ENCODE measurements at regions of chr11 and their contacts with region 1.

Region 1: DNA sequence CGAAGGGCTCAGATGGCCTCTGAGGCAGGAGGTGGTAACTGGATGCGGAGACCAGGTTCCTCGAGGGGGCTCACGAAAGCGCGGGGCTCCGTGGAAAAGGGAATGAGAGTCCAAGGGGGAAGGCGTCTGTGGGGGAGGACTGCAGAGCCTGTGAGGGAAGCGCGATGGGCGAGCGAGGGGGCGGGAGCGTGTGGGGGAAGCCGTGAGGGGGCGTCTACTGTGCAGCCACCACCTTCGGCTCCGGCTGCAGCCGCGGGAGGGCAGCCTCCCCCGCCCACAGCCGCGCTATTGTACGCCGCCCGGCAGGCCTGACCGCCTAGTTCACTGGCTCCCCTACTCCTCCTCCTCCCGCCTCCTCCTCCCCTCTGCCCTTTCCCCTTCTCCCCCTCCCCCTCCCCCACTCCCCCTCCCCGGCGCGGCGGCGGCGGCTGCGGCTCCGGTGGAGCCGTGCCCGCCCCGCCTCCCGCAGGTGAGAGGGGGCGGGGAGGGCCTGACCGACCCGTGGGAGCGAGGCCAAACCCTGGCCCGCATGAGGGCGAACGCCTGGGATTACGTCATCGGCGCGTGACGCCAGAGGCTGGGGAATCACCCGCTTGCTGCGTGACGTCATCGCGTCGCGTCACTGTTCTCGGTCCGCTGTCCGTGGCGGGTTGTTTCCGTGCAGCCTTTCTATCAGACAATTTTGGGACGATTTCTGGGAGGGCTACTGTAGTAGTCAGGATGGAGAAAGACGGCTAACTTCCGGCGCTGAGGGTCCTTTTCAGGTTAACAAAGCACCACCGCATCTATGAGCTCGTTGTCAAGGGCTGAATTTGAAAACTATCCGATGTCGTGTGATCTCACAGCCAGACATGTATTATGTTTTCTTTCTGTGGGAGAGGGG is at the start of gene PAK1:
- DNase-seq: peak; percentile 91
- H3K4me3 Mint-ChIP-seq: peak within 1 kb of the TSS; percentile 71
- H3K27ac Mint-ChIP-seq: peak within 1 kb of the TSS; percentile 38
- H3K4me1 Mint-ChIP-seq: peaks cover 5% of the 10 kb centered on the region
- H3K27me3 Mint-ChIP-seq: peaks cover 13% of the 10 kb centered on the region
- total RNA-seq, gene PAK1: 30.4 to 33.1 TPM

Region 2: DNA sequence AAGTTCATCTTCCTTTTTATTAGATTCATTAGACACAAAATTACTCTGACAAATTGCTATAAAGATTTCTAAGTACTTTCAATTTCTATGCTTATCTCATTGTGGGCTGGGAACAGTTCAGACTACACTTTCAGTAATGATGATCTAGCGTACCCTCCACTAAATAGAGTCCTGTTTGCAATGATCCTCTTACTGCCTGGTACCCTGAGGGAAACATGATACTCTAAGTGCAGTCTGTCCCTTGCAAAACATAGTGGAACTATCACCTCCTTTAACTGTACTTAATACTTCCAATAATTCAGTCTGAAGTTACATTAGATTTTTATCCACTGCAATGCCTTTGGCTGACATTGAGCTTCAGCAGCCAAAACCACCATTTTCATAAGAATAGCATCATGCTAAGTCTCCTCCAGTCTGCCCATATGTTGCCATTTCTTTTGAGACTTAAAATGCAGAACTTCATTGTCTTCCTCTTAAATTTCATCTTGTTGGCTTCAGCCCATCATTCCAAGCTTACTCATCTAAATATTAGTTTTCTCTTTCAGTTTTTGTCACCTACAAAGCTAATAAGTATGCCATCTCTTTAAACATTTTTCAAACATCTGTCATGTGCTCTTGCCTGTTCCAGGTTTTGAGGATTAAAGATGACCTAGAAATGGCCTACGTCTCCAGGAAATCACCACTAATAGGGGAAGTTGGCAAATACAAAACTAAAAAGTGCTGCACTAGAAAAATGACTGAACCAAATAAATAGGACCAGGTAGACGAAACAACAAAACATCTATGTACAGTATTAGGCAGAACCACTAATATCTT is 55.7 kb before region 1 on chr11:
- CTCF ChIA-PET with region 1: no interaction called
- POLR2A ChIA-PET with region 1: no interaction called
- intact Hi-C with region 1: no loop called
- DNase-seq: no peak
- H3K4me3 Mint-ChIP-seq: no peak overlapping the region
- H3K27ac Mint-ChIP-seq: no peak overlapping the region
- H3K4me1 Mint-ChIP-seq: peaks cover 3% of the 10 kb centered on the region
- H3K27me3 Mint-ChIP-seq: no peaks in the 10 kb centered on the region

Region 3: DNA sequence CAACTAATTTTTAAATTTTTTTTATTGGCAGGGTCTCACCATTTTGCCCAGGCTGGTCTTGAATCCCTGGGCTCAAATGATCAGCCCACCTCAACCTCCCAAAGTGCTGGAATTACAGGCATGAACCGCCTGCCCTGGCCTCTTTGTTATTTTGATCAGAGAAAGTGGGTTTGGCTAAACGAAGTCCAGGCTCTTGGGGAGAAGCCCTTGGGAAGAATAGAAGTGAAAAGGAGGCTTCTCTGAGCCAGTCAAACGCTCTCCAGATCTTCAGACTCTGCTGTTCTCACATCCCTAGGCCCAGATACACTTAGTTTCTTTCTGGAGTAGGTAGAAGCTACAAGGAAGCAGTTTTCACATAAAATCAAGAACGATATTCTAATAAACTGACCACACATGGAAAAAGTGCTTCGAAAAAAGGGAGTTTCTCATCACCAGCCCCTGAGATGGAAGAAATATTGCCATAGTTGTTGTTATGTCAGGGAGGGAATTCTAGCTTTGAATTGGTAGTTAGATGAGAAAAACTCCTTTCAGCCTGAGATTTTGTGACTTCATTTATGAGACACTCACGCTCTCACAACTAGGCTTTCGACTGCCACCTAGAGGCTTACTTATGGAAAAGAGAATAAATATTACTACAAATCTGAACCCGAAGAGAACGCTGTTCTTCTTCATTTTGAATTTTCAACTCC is 74.0 kb after region 1 on chr11:
- CTCF ChIA-PET with region 1: interaction called, 8 read pairs
- POLR2A ChIA-PET with region 1: interaction called, 3 read pairs
- intact Hi-C with region 1: loop called (anchors 2 kb)
- DNase-seq: peak; percentile 21
- H3K4me3 Mint-ChIP-seq: no peak overlapping the region
- H3K27ac Mint-ChIP-seq: no peak overlapping the region
- H3K4me1 Mint-ChIP-seq: peaks cover 2% of the 10 kb centered on the region
- H3K27me3 Mint-ChIP-seq: no peaks in the 10 kb centered on the region

Region 4: GRCh38 chr11:77637345-77638165 is 163.5 kb after region 1 on chr11 and contains the start of gene CLNS1A:
- CTCF ChIA-PET with region 1: interaction called, 3 read pairs
- POLR2A ChIA-PET with region 1: no interaction called
- intact Hi-C with region 1: loop called (anchors 5 kb)
- DNase-seq: peak; percentile 90
- H3K4me3 Mint-ChIP-seq: peak within 1 kb of the TSS; percentile 95
- H3K27ac Mint-ChIP-seq: peak within 1 kb of the TSS; percentile 95
- H3K4me1 Mint-ChIP-seq: peaks cover 35% of the 10 kb centered on the region
- H3K27me3 Mint-ChIP-seq: no peaks in the 10 kb centered on the region
- total RNA-seq, gene CLNS1A: 199 to 200 TPM

Region 5: GRCh38 chr11:77747381-77747969 is 273.4 kb after region 1 on chr11:
- CTCF ChIA-PET with region 1: no interaction called
- POLR2A ChIA-PET with region 1: no interaction called
- intact Hi-C with region 1: no loop called
- DNase-seq: no peak
- H3K4me3 Mint-ChIP-seq: no peak overlapping the region
- H3K27ac Mint-ChIP-seq: no peak overlapping the region
- H3K4me1 Mint-ChIP-seq: peaks cover 5% of the 10 kb centered on the region
- H3K27me3 Mint-ChIP-seq: no peaks in the 10 kb centered on the region

Measured in activated CD4-positive, alpha-beta memory T cell treated with anti-CD3 and anti-CD28 coated beads for 36 hours (primary cell).